ENCODE measurements at regions of chr5 and their contacts with region 1.

Region 1: DNA sequence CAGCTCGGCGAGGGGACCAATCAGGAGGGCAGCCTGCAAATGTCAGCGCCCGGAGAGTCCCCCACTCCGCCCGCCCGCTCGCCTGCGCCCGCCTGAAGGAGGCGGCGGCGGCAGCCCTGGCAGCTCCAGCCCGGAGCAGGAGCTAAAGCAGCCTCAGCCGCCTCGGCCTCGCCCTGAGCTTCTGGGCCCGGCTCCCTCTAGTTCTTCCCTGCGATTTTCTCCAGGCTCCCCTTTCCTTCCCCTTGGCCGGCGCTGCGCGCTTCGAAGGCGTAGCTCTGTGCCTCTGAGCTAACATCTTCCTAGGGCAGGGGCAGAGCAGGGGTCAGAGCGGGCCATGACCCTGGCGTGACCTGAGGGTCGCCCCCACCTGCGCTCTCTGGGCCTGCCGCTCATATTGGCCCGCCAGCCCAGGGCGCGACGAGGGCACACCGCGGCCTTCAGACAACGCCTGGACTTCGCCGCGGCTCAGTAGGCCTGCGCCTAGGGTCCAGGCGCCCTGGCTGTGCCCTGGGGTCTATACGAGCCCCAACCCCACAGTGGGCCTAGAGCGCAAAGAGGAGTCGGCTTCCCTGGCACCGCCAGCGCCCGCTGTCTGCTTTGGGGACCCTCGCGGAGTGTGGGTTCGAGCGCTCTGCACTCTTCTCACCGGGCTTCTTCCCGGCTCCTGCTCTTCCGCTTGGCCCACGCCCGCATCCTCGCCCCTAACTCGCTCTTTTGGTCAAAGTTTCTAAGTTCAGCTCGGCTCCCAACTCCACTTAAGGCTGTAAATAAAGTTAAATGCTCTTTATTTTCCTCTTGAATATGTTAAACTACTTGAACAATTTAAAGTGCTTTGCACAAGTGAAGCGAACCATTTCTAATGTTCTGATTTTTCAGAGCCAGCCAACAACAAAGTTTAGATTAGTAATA is 504 bp upstream of the OTP start:
- DNase-seq: no peak
- H3K4me3 Mint-ChIP-seq: no peak overlapping the region
- H3K27ac Mint-ChIP-seq: no peak overlapping the region
- H3K4me1 Mint-ChIP-seq: peaks cover 18% of the 10 kb centered on the region
- H3K27me3 Mint-ChIP-seq: peaks cover 82% of the 10 kb centered on the region

Region 2: DNA sequence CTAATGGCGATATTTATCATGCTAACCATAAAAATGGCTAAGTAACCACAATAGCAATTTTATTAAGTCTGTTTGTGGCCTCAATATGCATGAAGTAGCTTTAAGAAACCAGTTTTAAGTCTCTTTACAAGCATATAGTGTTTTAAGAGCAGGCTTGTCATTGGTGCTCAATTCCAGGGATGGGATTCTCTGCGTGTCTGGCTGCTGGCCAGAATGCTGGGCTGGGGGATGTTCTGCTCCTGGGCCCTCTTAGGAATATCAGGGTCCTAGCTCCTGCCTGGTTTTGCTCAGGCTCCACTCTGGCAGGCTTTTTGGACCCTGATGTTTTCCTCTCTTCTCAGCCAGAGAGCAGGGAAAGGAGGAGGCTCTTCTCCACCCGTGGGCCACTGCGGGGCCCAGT is 301.3 kb before region 1 on chr5:
- intact Hi-C with region 1: no loop called
- DNase-seq: no peak
- H3K4me3 Mint-ChIP-seq: no peak overlapping the region
- H3K27ac Mint-ChIP-seq: no peak overlapping the region
- H3K4me1 Mint-ChIP-seq: no peaks in the 10 kb centered on the region
- H3K27me3 Mint-ChIP-seq: peaks cover 6% of the 10 kb centered on the region

Region 3: GRCh38 chr5:77560677-77561263 is 78.2 kb before region 1 on chr5:
- intact Hi-C with region 1: no loop called
- DNase-seq: no peak
- H3K4me3 Mint-ChIP-seq: no peak overlapping the region
- H3K27ac Mint-ChIP-seq: no peak overlapping the region
- H3K4me1 Mint-ChIP-seq: no peaks in the 10 kb centered on the region
- H3K27me3 Mint-ChIP-seq: peaks cover 11% of the 10 kb centered on the region

Region 4: GRCh38 chr5:77828445-77828844 is 189.4 kb after region 1 on chr5:
- intact Hi-C with region 1: no loop called
- DNase-seq: no peak
- H3K4me3 Mint-ChIP-seq: no peak overlapping the region
- H3K27ac Mint-ChIP-seq: no peak overlapping the region
- H3K4me1 Mint-ChIP-seq: no peaks in the 10 kb centered on the region
- H3K27me3 Mint-ChIP-seq: peaks cover 17% of the 10 kb centered on the region

Region 5: GRCh38 chr5:77844623-77845323 is 205.8 kb after region 1 on chr5:
- intact Hi-C with region 1: loop called (anchors 5 kb)
- DNase-seq: no peak
- H3K4me3 Mint-ChIP-seq: peak overlapping the region; percentile 53
- H3K27ac Mint-ChIP-seq: no peak overlapping the region
- H3K4me1 Mint-ChIP-seq: peaks cover 9% of the 10 kb centered on the region
- H3K27me3 Mint-ChIP-seq: peaks cover 72% of the 10 kb centered on the region